ENCODE measurements at regions of chr5 and their contacts with region 1.

Region 1: DNA sequence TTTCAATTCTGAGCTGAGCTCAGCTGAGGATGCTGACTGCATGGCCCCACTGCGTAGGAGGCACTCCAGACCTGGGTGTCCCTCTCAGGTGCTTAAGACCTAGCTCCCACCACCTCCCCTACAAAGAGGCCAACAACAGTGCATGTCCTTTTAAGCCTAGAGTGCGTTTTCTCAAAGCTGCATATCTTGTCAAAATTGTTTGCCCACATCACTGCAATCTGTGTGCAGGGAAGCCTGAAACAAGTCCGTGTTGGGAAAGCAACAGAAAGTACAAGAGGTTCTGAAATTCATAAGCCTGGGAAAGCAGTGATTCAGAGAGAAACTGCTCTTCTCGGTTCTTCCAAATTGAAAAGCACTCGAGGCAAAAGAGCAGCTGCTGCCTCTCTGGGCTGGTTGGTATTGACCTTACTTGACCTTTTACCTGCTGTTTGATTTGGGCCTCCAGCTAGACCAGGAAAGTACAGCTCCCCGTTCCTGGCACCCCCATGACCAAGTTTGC is 238.4 kb downstream of the NR2F1-AS1 start:
- DNase-seq: no peak
- ATAC-seq: no peak
- H3K4me3 ChIP-seq: no peak overlapping the region
- H3K27ac ChIP-seq: no peak overlapping the region
- H3K4me1 ChIP-seq: no peaks in the 10 kb centered on the region
- CTCF ChIP-seq: no peak
- EP300 ChIP-seq: no peak
- POLR2A ChIP-seq: no peak
- RAD21 ChIP-seq: no peak

Region 2: GRCh38 chr5:93452255-93452654 is 109.6 kb after region 1 on chr5:
- CTCF ChIA-PET with region 1: no interaction called
- POLR2A ChIA-PET with region 1: interaction called, 16 read pairs
- DNase-seq: no peak
- ATAC-seq: no peak
- H3K4me3 ChIP-seq: no peak overlapping the region
- H3K27ac ChIP-seq: no peak overlapping the region
- H3K4me1 ChIP-seq: no peaks in the 10 kb centered on the region
- CTCF ChIP-seq: no peak
- EP300 ChIP-seq: no peak
- POLR2A ChIP-seq: no peak
- RAD21 ChIP-seq: no peak